ENCODE measurements at regions of chr3 and their contacts with region 1.

Region 1: GRCh38 chr3:115814778-115815380 is 191.6 kb downstream of the GAP43 start:
- DNase-seq: peak; percentile 64
- ATAC-seq: peak; percentile 96
- H3K4me3 ChIP-seq: no peak overlapping the region
- H3K27ac ChIP-seq: no peak overlapping the region
- H3K4me1 ChIP-seq: no peaks in the 10 kb centered on the region
- H3K27me3 ChIP-seq: no peaks in the 10 kb centered on the region
- CTCF ChIP-seq: peak; percentile 92

Region 2: DNA sequence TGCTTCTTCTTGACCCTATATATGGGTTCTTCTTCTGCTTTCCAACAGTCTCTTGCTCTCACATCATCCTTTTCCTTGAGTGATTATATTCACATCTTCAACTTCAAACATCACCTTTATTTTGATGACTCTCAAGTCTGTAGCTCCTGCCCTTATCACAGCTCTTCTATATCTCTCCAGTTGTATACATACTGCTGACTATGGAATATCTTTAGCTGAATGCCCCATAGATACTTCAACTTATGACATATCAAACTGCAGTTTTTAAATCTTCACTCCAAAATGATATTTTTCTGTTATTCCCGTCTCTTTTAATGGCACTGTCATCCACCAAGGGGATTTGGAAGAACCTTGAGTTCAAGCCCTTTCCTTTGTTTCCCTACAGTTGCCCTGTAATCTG is 806.9 kb before region 1 on chr3:
- CTCF ChIA-PET with region 1: no interaction called
- POLR2A ChIA-PET with region 1: no interaction called
- in situ Hi-C with region 1: no loop called
- intact Hi-C with region 1: no loop called
- DNase-seq: no peak
- ATAC-seq: no peak
- H3K4me3 ChIP-seq: no peak overlapping the region
- H3K27ac ChIP-seq: no peak overlapping the region
- H3K4me1 ChIP-seq: no peaks in the 10 kb centered on the region
- H3K27me3 ChIP-seq: no peaks in the 10 kb centered on the region
- CTCF ChIP-seq: no peak

Region 3: GRCh38 chr3:115692887-115693524 is 121.9 kb before region 1 on chr3:
- CTCF ChIA-PET with region 1: no interaction called
- POLR2A ChIA-PET with region 1: no interaction called
- in situ Hi-C with region 1: no loop called
- intact Hi-C with region 1: loop called (anchors 2 kb)
- DNase-seq: peak; percentile 59
- ATAC-seq: peak; percentile 97
- H3K4me3 ChIP-seq: no peak overlapping the region
- H3K27ac ChIP-seq: no peak overlapping the region
- H3K4me1 ChIP-seq: no peaks in the 10 kb centered on the region
- H3K27me3 ChIP-seq: no peaks in the 10 kb centered on the region
- CTCF ChIP-seq: peak; percentile 90

Region 4: GRCh38 chr3:115766587-115767480 is 48.0 kb before region 1 on chr3:
- CTCF ChIA-PET with region 1: no interaction called
- POLR2A ChIA-PET with region 1: no interaction called
- in situ Hi-C with region 1: no loop called
- intact Hi-C with region 1: no loop called
- DNase-seq: no peak
- ATAC-seq: no peak
- H3K4me3 ChIP-seq: no peak overlapping the region
- H3K27ac ChIP-seq: no peak overlapping the region
- H3K4me1 ChIP-seq: no peaks in the 10 kb centered on the region
- H3K27me3 ChIP-seq: no peaks in the 10 kb centered on the region
- CTCF ChIP-seq: no peak

Region 5: GRCh38 chr3:116314476-116314875 is 499.6 kb after region 1 on chr3:
- CTCF ChIA-PET with region 1: no interaction called
- POLR2A ChIA-PET with region 1: no interaction called
- in situ Hi-C with region 1: no loop called
- intact Hi-C with region 1: no loop called
- DNase-seq: no peak
- ATAC-seq: no peak
- H3K4me3 ChIP-seq: no peak overlapping the region
- H3K27ac ChIP-seq: no peak overlapping the region
- H3K4me1 ChIP-seq: no peaks in the 10 kb centered on the region
- H3K27me3 ChIP-seq: no peaks in the 10 kb centered on the region
- CTCF ChIP-seq: no peak